ENCODE measurements at regions of chr6 and their contacts with region 1.

Region 1: DNA sequence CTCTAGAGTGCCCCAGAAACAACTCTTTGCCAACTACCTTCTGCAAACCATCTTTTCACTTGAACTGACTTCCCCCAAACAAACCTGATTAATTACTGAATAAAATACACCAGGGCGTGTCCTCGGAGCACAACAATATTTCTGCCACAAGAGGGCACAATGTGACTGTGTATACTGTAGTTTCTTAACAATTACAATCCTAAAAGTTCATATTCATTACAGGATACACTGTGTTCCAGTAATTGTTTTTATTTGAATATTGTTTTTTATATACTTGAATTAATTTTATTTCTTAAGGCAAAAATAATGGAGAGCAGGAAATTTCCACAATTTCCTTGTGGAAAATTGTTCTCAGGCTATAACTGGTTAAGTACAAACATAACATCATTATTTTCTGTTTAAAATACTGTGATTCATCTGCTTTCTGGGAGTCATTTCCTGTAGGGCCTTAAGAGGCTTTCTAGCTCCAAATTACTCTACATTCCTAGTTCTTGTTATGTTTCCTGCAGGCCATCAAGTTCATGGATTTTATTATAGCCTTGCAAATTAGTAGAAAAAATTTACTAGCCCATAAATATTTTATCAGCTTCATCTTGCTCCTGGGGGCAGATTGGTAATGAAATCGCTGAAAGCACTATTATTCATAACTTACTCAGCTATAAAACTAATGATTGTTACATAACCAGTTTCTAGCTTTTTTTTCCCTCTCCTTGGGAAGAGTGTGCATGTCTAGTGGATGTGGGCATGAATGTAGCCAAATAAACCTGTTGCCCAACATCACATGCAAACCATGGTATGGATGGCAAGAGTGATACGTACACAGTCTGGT is 51.9 kb upstream of the SLC22A16 start:
- DNase-seq: peak in 1 of 2 donors; percentile 51
- ATAC-seq: peak; percentile 48 to 89 (median 84)
- H3K4me3 ChIP-seq: no peak overlapping the region
- H3K27ac ChIP-seq: peak overlapping the region in 7 of 10 donors; percentile 8 to 52 (median 38)
- H3K4me1 ChIP-seq: peaks cover 0 to 19% (median 6%) of the 10 kb centered on the region in 9 donors
- H3K27me3 ChIP-seq: no peaks in the 10 kb centered on the region
- CTCF ChIP-seq: peak; percentile 72 to 88 (median 81)

Region 2: DNA sequence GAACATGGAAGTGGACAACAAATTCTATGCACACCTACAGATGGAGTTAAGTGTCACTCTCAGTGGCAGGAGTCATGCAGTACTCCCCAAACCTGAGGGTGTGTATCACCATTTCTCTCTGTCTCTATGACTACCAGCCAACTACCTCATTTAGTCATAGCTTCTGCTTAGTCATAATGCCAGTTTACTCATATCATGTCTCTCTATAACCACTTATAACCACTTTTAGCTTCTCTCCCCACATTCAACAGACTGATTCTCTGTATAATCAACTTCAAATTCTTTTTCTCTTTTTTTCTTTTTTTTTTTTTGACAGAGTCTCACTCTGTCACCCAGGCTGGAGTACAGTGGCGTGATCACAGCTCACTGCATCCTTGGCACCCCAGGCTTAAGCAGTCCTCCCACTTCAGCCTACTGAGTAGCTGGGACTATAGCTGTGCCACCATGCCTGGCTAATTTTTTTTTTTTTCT is 416.4 kb after region 1 on chr6:
- intact Hi-C with region 1: loop called in 2 of 10 experiments (anchors 5 kb)
- DNase-seq: no peak
- ATAC-seq: peak in 1 of 8 donors; percentile 57
- H3K4me3 ChIP-seq: no peak overlapping the region
- H3K27ac ChIP-seq: no peak overlapping the region
- H3K4me1 ChIP-seq: peaks cover 0 to 14% (median 0%) of the 10 kb centered on the region in 9 donors
- H3K27me3 ChIP-seq: no peaks in the 10 kb centered on the region
- CTCF ChIP-seq: no peak

Region 3: DNA sequence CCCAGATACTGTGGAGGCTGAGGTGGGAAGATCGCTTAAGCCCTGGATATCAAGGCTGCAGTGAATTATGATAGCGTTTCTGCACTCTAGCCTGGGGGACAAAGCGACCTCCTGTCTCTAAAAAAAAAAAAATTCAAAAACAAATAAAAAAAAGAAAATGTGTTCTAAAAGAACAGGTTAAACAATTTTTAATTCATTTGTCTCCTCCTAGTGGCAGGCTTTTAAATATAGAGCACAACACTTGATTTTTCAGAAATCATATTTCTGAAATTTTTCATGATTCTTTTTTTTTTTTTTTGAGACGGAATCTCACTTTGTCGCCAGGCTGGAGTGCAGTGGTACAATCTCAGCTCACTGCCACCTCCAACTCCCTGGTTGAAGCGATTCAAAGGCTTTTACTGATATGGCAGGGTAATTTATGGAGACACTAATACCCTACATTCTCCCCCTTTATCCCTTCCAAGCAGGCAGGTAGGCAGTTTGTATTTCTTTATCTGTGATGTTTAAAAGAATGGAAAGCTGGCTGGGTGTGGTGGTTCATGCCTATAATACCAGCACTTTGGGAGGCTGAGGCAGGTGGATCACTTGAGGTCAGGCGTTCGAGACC is 421.5 kb after region 1 on chr6:
- intact Hi-C with region 1: loop called in 8 of 10 experiments (anchors 2 to 5 kb)
- DNase-seq: no peak
- ATAC-seq: peak in 1 of 8 donors; percentile 19
- H3K4me3 ChIP-seq: no peak overlapping the region
- H3K27ac ChIP-seq: no peak overlapping the region
- H3K4me1 ChIP-seq: peaks cover 0 to 10% (median 0%) of the 10 kb centered on the region in 9 donors
- H3K27me3 ChIP-seq: no peaks in the 10 kb centered on the region
- CTCF ChIP-seq: peak; percentile 19 to 70 (median 56)

Region 4: GRCh38 chr6:110958329-110959192 is 430.2 kb after region 1 on chr6 and contains the start of gene GTF3C6:
- intact Hi-C with region 1: loop called in 6 of 10 experiments (anchors 2 to 5 kb)
- DNase-seq: peak; percentile 92 to 94
- ATAC-seq: peak; percentile 98 to 100 (median 99)
- H3K4me3 ChIP-seq: peak within 1 kb of the TSS; percentile 55 to 91 (median 83)
- H3K27ac ChIP-seq: peak within 1 kb of the TSS; percentile 46 to 97 (median 90)
- H3K4me1 ChIP-seq: peaks cover 0 to 24% (median 13%) of the 10 kb centered on the region in 9 donors
- H3K27me3 ChIP-seq: no peaks in the 10 kb centered on the region
- CTCF ChIP-seq: peak in 1 of 9 donors; percentile 6
- total RNA-seq, gene GTF3C6: 96.0 to 128 (median 107) TPM

Region 5: DNA sequence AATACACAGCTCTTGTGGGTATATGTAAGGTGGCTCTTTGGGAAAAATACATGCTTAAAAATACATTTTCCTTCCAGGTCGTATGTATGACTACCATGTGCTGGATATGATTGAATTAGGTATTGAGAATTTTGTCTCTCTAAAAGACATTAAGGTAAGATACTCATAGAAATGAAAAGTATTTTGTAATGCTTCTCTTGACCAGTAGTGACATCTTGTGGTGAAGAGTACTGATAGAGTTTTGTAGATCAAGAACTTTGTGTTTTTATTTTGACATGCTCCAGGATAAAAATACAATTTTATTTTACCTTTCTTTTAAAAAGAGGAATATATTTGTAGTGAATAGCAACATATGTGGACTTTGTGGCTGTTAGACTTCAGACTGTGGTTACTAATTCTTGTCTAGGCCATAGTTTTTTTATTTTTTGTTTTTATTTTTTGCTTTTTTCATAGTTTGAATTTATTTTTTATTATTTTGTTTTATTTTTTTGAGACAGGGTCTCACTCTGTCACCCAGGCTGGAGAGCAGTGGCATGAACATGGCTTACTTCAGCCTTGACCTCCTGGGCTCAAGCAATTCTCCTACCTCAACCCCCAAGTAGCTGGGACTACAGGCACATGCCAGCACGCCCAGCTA is 471.4 kb after region 1 on chr6:
- intact Hi-C with region 1: loop called in 5 of 10 experiments (anchors 2 to 10 kb)
- DNase-seq: no peak
- ATAC-seq: peak in 1 of 8 donors; percentile 36
- H3K4me3 ChIP-seq: no peak overlapping the region
- H3K27ac ChIP-seq: no peak overlapping the region
- H3K4me1 ChIP-seq: no peaks in the 10 kb centered on the region
- H3K27me3 ChIP-seq: no peaks in the 10 kb centered on the region
- CTCF ChIP-seq: peak; percentile 14 to 66 (median 47)

Measured in heart right ventricle (tissue), 16 donors.